Posterior vena cava (tissue), 2 donors: ENCODE measurements at regions of chr1 and their contacts with region 1.

Region 1: GRCh38 chr1:212990276-212990675 is 25.4 kb downstream of the ANGEL2 start:
- DNase-seq: no peak

Region 2: GRCh38 chr1:212814537-212815334 is 175.5 kb before region 1 on chr1:
- intact Hi-C with region 1: loop called in 1 of 2 experiments (anchors 10 kb)
- DNase-seq: no peak

Region 3: GRCh38 chr1:213221209-213221608 is 230.9 kb after region 1 on chr1:
- intact Hi-C with region 1: no loop called
- DNase-seq: no peak